Activated T-helper 1 cell treated with anti-CD3 and anti-CD28 coated beads, Interleukin-12 subunit alpha, Interleukin-12 subunit beta, Interleukin-2, Interleukin-4 antibody, amounts not matched to agents 30 ng/mL and 10 ng/mL and 1 ng/mL, durations not matched to agents 14 hours and 24 hours and 36 hours (primary cell): ENCODE measurements at regions of chr9 and their contacts with region 1.

Region 1: GRCh38 chr9:36572515-36573418 is at the start of gene MELK:
- DNase-seq: peak; percentile 86
- H3K4me3 Mint-ChIP-seq: peak within 1 kb of the TSS; percentile 97
- H3K27ac Mint-ChIP-seq: peak within 1 kb of the TSS; percentile 91
- H3K4me1 Mint-ChIP-seq: peaks cover 26% of the 10 kb centered on the region
- H3K27me3 Mint-ChIP-seq: peaks cover 2% of the 10 kb centered on the region
- total RNA-seq, gene MELK: 46.4 and 48.3 TPM in 2 replicates

Region 2: GRCh38 chr9:34620061-34620994 is 1952.4 kb before region 1 on chr9 and contains the start of gene DCTN3:
- intact Hi-C with region 1: loop called (anchors 2 kb)
- DNase-seq: peak; percentile 91
- H3K4me3 Mint-ChIP-seq: peak within 1 kb of the TSS; percentile 89
- H3K27ac Mint-ChIP-seq: peak within 1 kb of the TSS; percentile 80
- H3K4me1 Mint-ChIP-seq: peaks cover 41% of the 10 kb centered on the region
- H3K27me3 Mint-ChIP-seq: peaks cover 31% of the 10 kb centered on the region
- total RNA-seq, gene DCTN3: 59.3 and 62.2 TPM in 2 replicates

Region 3: DNA sequence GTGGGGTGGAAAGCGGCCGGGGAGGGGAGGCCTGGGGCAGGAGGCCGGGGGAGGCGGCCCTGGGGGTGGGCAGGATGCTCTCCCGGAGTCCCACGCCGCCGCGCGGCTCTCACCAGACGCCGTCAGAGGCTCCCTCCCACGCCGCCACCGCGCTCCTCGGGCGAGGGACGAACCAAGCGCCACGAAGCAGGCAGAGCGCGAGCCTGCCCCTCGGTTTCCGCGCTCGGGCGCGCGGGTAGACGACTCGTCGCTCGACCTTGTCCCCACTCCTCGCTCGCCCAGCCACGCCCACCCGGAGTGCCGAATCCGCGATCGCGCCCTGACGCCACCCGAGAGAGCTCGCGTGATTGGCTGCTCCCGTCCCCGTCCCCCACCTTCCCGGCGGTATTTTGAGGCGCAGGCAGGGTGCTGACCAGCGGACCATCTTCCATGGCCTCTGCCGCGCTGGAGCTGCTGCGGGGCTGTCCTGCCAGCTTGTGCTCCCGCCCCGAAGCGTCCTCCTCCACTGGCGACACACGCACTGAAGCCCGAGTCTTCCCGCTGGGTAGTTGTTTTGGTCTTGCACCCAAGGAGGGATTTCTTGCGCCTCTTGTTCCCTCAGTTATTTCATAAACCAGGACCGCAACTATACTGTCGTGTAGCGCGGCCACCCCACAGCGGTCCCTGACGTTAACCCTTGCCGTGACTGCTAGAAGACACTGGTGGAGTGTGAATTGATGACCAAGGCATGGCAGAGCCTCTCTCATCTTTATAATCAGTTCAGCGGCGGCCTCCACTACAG is 314.4 kb before region 1 on chr9 and contains the start of gene GNE:
- intact Hi-C with region 1: loop called (anchors 5 kb)
- DNase-seq: peak; percentile 98
- H3K4me3 Mint-ChIP-seq: peak within 1 kb of the TSS; percentile 96
- H3K27ac Mint-ChIP-seq: peak within 1 kb of the TSS; percentile 96
- H3K4me1 Mint-ChIP-seq: peaks cover 15% of the 10 kb centered on the region
- H3K27me3 Mint-ChIP-seq: no peaks in the 10 kb centered on the region
- total RNA-seq, gene GNE: 21.7 and 22.7 TPM in 2 replicates

Region 4: GRCh38 chr9:36407122-36407723 is 165.5 kb before region 1 on chr9:
- intact Hi-C with region 1: loop called (anchors 1 kb)
- DNase-seq: peak; percentile 49
- H3K4me3 Mint-ChIP-seq: no peak overlapping the region
- H3K27ac Mint-ChIP-seq: peak overlapping the region; percentile 62
- H3K4me1 Mint-ChIP-seq: peaks cover 13% of the 10 kb centered on the region
- H3K27me3 Mint-ChIP-seq: no peaks in the 10 kb centered on the region

Region 5: GRCh38 chr9:36487482-36488388 is 85.0 kb before region 1 on chr9:
- intact Hi-C with region 1: loop called (anchors 1 kb)
- DNase-seq: peak; percentile 91
- H3K4me3 Mint-ChIP-seq: peak overlapping the region; percentile 87
- H3K27ac Mint-ChIP-seq: peak overlapping the region; percentile 87
- H3K4me1 Mint-ChIP-seq: peaks cover 53% of the 10 kb centered on the region
- H3K27me3 Mint-ChIP-seq: no peaks in the 10 kb centered on the region

Region 6: DNA sequence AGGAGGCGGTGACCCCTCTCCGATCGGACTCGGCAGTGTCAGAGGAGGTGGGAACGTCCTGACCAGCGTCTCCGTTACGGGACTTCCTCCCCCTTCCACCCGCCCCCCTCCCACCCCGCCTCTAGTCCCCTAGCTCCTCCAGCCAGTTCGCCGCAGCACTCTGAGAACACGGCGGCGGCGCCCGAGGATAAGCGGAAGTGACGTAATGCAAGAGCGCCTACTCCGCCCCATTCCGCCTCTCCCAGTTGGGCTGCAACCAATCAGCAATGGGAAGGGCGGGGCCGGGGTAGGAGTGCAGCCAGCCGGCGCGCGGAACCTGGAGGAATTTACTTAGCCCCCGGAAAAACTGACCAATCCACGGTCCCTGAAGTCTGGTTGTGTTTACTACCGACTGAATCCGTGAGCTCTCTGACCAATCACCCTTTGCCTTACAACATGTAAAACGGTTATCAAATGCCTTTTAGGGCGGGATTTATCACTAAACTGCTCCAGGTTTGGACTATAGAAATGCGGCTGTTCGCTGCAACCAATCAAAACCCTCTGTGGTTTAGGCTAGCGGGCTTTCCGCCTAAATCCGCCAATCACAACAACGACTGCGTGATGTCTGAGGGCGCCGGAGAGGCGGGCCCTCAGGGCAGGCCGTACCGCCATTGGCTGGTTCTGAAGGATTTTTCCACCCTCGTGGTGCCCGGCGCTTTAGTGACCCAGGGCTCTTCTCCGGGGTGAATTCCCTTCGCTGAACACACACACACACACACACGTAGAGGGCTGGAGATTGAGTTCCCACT is 892.7 kb after region 1 on chr9 and contains the start of gene ZBTB5:
- intact Hi-C with region 1: loop called (anchors 10 kb)
- DNase-seq: peak; percentile 98
- H3K4me3 Mint-ChIP-seq: peak within 1 kb of the TSS; percentile 97
- H3K27ac Mint-ChIP-seq: peak within 1 kb of the TSS; percentile 95
- H3K4me1 Mint-ChIP-seq: peaks cover 47% of the 10 kb centered on the region
- H3K27me3 Mint-ChIP-seq: no peaks in the 10 kb centered on the region
- total RNA-seq, gene ZBTB5: 9.6 and 11.2 TPM in 2 replicates